ENCODE measurements at regions of chr20 and their contacts with region 1.

Region 1: DNA sequence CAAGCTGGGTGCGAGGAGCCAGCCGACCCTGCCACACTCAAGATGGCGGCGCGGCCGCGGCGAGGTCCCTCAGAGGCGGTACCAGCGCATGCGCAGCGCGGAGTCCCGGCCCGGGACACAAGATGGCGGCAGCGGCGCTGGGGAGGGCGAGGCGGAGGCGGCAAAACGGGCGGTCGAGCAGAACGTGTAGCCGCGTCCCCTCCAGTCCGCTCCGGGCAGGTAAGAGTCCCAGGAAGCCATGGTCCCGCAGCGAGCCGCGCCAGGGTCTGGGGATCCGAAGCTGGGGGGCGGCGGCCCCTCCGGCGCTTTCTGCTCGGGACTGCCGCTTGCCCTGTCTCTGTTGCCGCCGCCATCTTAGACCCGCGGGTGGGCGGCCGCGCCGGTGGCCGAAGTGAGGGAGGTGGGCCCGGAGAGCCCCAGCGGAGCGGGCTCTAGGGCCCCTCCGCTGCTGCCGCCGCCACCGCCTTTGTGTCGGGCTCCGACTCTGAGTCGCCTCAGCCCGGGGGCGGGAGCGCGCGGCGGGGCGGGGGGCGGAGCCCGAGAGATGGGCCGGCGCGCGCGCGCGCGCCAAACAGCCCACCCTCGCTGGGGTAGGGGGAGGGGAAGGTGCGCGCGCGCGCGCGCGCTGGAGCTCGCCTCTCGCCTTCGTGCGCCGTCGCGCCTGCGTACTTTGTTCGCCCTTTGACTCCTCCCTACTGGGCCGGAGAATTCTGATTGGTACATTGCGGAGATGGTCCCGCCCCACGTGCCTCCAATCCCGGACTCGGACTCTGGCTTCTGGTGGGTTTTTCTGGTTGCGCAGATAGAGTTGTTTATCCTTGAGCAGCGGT is at the start of gene PCIF1:
- DNase-seq: peak; percentile 92 to 99
- H3K4me3 ChIP-seq: peak within 1 kb of the TSS; percentile 73 to 95
- H3K27ac ChIP-seq: peak within 1 kb of the TSS; percentile 98 to 100
- H3K4me1 ChIP-seq: peaks cover 5 to 16% of the 10 kb centered on the region in 2 donors
- H3K27me3 ChIP-seq: no peaks in the 10 kb centered on the region
- CTCF ChIP-seq: no peak
- total RNA-seq, gene PCIF1: 45.7 TPM

Region 2: DNA sequence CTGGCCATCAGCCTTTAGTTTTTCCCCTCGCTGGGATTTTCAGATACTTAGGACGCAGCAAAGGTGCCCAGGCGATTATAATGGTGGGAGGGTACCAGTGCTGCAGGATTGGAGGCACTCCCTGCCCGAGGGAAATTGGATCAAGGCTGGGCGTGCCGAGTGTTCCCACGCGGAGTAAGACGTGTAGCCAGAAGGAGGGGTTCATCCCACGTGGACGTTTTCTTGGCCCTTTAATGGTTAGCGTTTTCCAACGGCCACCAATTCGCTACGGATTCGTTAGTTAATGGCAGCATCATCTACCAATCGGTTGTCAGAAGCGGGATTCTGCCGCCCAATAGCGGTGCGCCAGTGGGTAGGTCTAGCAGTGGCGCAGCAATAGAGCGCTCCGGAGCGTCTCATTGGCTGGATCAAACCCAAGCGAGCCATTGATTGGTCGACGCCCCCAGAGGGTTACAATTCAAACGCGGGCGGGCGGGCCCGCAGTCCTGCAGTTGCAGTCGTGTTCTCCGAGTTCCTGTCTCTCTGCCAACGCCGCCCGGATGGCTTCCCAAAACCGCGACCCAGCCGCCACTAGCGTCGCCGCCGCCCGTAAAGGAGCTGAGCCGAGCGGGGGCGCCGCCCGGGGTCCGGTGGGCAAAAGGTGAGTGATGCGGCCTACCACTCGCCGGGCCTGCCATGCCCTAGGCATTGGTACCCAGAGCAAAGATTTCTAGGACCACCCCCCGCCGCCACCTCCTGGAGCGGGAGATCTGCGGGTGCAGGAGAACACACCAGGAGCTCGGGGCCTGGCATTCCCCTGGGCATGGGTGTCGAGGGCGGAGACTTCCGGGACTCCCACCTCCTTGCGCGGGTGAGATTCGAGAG is 122.4 kb before region 1 on chr20 and contains the start of gene UBE2C:
- intact Hi-C with region 1: loop called (anchors 5 kb)
- DNase-seq: peak; percentile 95 to 99
- H3K4me3 ChIP-seq: peak within 1 kb of the TSS; percentile 56 to 80
- H3K27ac ChIP-seq: peak within 1 kb of the TSS; percentile 16 to 45
- H3K4me1 ChIP-seq: peaks cover 9% of the 10 kb centered on the region in 2 donors
- H3K27me3 ChIP-seq: no peaks in the 10 kb centered on the region
- CTCF ChIP-seq: no peak
- total RNA-seq, gene UBE2C: not detected

Region 3: GRCh38 chr20:45880988-45881788 is 53.6 kb before region 1 on chr20 and contains the start of gene ZSWIM1:
- intact Hi-C with region 1: loop called (anchors 2 kb)
- DNase-seq: peak; percentile 99 to 100
- H3K4me3 ChIP-seq: peak within 1 kb of the TSS; percentile 67 to 71
- H3K27ac ChIP-seq: peak within 1 kb of the TSS; percentile 83 to 88
- H3K4me1 ChIP-seq: peaks cover 0 to 14% of the 10 kb centered on the region in 2 donors
- H3K27me3 ChIP-seq: no peaks in the 10 kb centered on the region
- CTCF ChIP-seq: no peak
- total RNA-seq, gene ZSWIM1: 3.5 TPM

Region 4: DNA sequence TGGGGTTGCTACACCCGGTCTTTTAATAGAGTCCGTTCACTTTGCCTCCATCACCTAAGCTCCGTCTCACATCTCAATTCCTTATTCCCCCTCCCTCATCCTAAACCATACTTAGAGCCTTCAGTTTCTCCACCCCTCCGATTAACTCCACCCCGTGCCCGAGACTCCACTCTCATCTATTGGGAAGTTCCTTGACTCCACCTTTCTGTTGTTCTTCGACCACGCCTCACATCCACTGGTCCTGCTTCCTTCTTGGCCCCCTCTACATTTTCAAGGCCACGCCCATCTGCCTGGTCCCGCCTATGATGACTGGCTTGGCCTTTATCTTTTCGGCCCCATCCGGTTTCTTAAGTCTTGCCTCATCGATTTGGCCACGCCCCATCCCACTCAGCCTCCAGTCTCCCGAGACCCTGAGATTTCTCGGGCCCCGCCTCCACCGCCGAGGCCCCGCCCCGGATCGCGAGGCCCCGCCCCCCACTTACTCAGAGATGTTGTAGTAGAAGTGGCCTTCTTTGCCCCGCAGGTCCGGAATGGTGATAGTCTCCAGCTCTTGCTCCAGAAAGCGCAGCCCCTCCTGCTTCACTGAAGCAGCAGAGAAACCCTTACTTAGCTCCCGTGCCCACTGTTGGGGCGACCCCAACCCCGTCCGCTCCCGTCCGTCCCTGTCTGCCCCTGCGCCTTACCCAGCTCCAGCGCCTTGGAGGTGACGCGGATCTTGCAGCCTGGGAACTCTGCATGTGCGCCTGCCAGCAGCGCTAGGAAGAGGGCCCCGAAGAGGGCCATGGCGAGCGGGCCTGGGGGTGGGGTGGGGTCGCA is 23.9 kb before region 1 on chr20:
- intact Hi-C with region 1: loop called (anchors 1 kb)
- DNase-seq: peak; percentile 98 to 99
- H3K4me3 ChIP-seq: peak overlapping the region; percentile 49 to 64
- H3K27ac ChIP-seq: peak overlapping the region; percentile 38 to 71
- H3K4me1 ChIP-seq: peaks cover 6 to 13% of the 10 kb centered on the region in 2 donors
- H3K27me3 ChIP-seq: no peaks in the 10 kb centered on the region
- CTCF ChIP-seq: no peak

Region 5: GRCh38 chr20:46087161-46087560 is 152.4 kb after region 1 on chr20:
- intact Hi-C with region 1: no loop called
- DNase-seq: no peak
- H3K4me3 ChIP-seq: peak overlapping the region in 1 of 2 donors; percentile 2
- H3K27ac ChIP-seq: no peak overlapping the region
- H3K4me1 ChIP-seq: peaks cover 12 to 59% of the 10 kb centered on the region in 2 donors
- H3K27me3 ChIP-seq: no peaks in the 10 kb centered on the region
- CTCF ChIP-seq: peak; percentile 10 to 15 (median 11)

Measured in ascending aorta (tissue), 2 donors.